Activated naive CD4-positive, alpha-beta T cell treated with anti-CD3 and anti-CD28 coated beads, Interleukin-2, amount 10 ng/mL, durations not matched to agents 7 days and 5 days (primary cell): ENCODE measurements at regions of chr3 and their contacts with region 1.

Region 1: DNA sequence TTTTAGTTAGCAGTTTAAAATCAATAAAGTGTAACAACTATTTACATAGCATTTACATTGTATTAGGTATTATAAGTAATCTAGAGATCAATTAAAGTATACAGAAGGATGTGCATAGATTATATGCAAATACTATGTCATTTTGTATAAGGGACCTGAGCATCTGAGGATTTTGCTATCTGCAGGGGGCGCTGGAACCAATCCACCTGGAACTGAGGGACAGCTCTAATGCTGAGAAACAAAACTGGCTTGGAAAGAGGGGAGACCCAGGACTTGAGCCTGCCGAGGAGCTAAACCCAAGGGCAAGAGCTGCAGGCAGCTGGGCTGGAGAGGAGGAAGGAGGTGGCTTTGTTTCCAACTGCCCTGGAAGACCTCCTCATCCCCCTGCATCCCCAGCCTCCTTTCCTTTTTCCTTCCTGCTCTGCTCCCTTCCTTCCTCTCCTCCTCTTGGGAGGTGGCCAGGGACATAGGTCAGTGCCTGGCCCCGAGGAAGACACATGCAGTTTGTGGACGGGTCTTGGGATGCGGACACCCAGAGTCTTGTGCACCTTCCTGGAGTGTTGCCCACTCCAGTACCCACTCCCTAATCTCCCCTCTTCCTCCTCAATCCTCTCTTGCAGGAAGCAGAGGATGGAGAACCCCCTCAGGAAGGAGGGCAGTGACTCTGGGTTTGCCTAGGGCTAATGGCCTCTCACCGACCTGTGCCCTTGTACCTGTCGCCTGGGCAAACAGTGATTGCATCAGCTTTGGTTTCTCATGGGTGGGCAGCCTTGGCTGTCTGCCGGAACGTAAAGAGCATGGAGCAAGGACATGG is 828 bp upstream of the RTP3 start:
- DNase-seq: peak; percentile 72
- H3K4me3 Mint-ChIP-seq: no peak overlapping the region
- H3K27ac Mint-ChIP-seq: no peak overlapping the region
- H3K4me1 Mint-ChIP-seq: peaks cover 34% of the 10 kb centered on the region
- H3K27me3 Mint-ChIP-seq: peaks cover 5% of the 10 kb centered on the region

Region 2: DNA sequence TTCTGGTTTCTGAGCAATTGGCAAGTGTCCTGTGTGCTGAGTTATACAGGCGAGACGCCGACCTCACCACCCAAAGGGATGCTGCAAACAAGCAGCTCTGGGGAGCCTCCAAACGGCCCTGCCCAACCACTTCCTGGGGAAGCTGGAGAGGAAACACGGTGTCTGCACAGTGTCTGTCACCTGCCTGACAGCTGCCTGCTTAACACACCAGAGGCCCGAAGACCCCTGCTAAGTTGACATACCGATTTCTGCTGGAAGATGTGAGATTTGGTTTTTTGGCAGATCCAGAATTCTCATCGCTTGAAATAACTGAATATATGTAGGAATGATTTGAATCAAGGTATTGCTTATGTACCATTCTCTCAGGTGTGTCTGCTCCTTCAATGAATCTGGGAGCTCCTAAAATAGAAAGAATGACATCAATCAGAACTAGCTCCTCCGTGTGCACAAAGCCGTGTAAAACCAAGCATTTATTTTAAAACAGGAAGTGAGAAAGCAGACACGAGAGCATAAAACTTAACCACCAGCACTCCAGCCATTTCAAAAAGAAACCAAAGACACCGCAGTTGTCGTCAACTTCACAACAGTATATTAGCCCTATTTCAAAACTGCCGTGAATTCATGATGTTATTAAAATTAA is 42.0 kb after region 1 on chr3:
- CTCF ChIA-PET with region 1: interaction called, 11 read pairs
- DNase-seq: peak; percentile 92
- H3K4me3 Mint-ChIP-seq: peak overlapping the region; percentile 54
- H3K27ac Mint-ChIP-seq: peak overlapping the region; percentile 94
- H3K4me1 Mint-ChIP-seq: peaks cover 83% of the 10 kb centered on the region
- H3K27me3 Mint-ChIP-seq: peaks cover 8% of the 10 kb centered on the region

Region 3: DNA sequence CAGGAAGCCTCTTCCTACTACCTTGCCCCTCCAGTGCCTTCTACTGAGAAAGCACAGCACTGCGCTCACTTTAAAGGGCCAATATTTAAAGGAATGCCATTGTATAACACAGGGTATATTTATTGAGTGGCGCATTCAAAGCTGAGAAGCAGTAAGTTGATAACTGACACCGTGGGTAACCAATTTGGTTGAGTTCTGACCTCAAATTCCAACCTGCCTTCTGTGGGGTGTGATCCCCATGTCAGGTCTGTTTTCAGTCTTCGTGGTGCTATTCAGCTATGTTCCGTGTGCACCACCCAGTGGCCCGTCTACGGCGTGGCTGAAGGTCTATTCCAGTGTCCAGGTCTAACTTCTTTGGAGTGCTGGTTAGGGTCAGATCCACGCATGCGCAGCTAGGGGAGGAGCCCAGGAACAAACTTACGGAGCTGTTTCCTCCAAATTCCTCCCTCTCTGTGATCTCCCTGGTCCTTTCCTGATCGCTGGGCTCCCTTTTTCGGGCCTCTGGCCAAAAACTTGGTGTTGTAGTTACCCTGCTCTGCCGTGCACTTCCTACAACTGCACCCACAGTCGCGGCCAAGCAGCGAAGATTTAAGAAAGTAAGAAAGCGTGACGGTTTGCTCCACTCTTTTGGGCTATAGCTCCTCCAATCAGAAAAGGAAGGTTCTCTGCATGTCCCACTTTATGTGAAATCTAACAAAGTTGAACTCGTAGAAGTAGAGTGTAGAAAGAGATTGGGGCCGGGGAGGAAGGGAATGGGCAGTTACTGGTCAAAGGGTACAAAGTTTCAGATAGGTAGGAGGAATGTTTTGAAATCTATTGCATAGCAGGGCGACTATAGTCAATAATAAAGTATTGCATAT is 61.5 kb after region 1 on chr3:
- CTCF ChIA-PET with region 1: interaction called, 37 read pairs
- DNase-seq: peak; percentile 82
- H3K4me3 Mint-ChIP-seq: peak overlapping the region; percentile 63
- H3K27ac Mint-ChIP-seq: peak overlapping the region; percentile 6
- H3K4me1 Mint-ChIP-seq: peaks cover 31% of the 10 kb centered on the region
- H3K27me3 Mint-ChIP-seq: peaks cover 24% of the 10 kb centered on the region

Region 4: GRCh38 chr3:46629551-46630517 is 132.9 kb after region 1 on chr3:
- CTCF ChIA-PET with region 1: interaction called, 26 read pairs
- DNase-seq: peak; percentile 83
- H3K4me3 Mint-ChIP-seq: peak overlapping the region; percentile 44
- H3K27ac Mint-ChIP-seq: peak overlapping the region; percentile 53
- H3K4me1 Mint-ChIP-seq: peaks cover 25% of the 10 kb centered on the region
- H3K27me3 Mint-ChIP-seq: peaks cover 19% of the 10 kb centered on the region